Right ventricle myocardium superior (tissue), 1 donor: ENCODE measurements at regions of chr6 and their contacts with region 1.

Region 1: GRCh38 chr6:593139-593906 is 63.6 kb downstream of the HUS1B start:
- DNase-seq: no peak
- ATAC-seq: no peak

Region 2: GRCh38 chr6:722077-722524 is 128.8 kb after region 1 on chr6:
- intact Hi-C with region 1: loop called (anchors 10 kb)
- DNase-seq: peak; percentile 82
- ATAC-seq: peak; percentile 82

Region 3: DNA sequence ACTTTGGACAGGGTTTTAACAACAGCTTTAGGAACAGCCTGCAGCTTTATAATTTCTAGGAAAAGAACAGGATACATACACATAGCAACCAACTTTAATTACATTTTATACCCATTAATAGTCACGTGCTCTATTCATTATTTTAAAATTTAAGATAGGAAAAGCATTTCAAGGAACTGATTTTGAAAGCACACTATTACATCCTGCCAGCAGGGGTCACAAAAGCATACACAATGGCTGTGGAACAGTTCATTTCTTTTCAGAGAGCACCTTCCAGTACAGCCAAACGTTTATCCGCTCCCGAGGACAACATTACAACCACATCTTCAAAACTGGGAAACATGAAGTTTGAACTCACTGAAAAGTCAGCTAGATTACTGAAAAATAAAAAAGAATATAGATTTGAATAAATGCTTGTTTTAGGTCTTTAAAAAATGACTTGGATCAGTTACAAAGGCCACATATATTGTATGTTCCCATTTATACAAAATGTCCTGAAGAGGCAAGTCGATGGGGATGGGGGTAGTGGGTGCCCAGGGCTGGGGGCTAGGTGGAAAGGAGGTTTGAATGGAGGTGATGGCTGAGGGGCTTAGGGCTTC is 204.3 kb after region 1 on chr6:
- intact Hi-C with region 1: loop called (anchors 10 kb)
- DNase-seq: no peak
- ATAC-seq: peak; percentile 63

Region 4: GRCh38 chr6:1381481-1382330 is 788.4 kb after region 1 on chr6:
- intact Hi-C with region 1: loop called (anchors 5 kb)
- DNase-seq: no peak
- ATAC-seq: peak; percentile 96